ENCODE measurements at regions of chr1 and their contacts with region 1.

Region 1: GRCh38 chr1:21368515-21369289 is 71.2 kb upstream of the NBPF3 start:
- DNase-seq: peak; percentile 56 to 85
- H3K4me3 ChIP-seq: no peak overlapping the region
- H3K27ac ChIP-seq: no peak overlapping the region
- H3K4me1 ChIP-seq: no peaks in the 10 kb centered on the region; a peak in 1 of 7 replicates
- H3K27me3 ChIP-seq: no peaks in the 10 kb centered on the region
- CTCF ChIP-seq: peak; percentile 96 to 98 (median 98)
- EP300 ChIP-seq: no peak
- POLR2A ChIP-seq: no peak
- RAD21 ChIP-seq: peak; percentile 100

Region 2: GRCh38 chr1:21232044-21232443 is 136.7 kb before region 1 on chr1:
- CTCF ChIA-PET with region 1: interaction called, 201 read pairs
- POLR2A ChIA-PET with region 1: no interaction called
- DNase-seq: peak in 1 of 2 experiments; percentile 59
- H3K4me3 ChIP-seq: no peak overlapping the region
- H3K27ac ChIP-seq: no peak overlapping the region
- H3K4me1 ChIP-seq: no peaks in the 10 kb centered on the region
- H3K27me3 ChIP-seq: no peaks in the 10 kb centered on the region
- CTCF ChIP-seq: peak; percentile 25 to 75 (median 75)
- EP300 ChIP-seq: no peak
- POLR2A ChIP-seq: no peak
- RAD21 ChIP-seq: peak; percentile 89 to 90

Region 3: DNA sequence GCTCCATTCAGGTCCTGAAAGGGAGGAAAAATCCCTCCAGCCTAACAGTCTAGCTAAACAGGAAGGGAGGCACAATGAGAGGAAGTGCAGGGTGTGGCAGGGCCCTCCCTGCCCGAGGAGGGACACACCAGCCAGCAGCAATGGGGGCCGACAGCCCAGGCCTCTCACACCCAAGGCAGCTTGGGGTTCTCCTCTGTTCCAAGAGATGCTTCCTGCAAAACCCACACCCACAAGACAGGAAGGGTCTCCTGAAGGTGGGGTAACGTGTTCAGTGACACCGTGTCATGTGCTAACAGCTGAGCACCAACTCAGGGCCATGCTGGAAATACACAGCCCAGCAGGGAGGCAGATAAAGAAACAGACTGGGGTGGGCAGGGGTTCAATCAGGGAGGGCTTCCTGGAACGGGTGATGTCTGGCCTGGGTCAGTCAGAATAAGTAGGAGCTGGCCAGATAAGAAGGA is 88.7 kb before region 1 on chr1:
- CTCF ChIA-PET with region 1: interaction called, 26 read pairs
- POLR2A ChIA-PET with region 1: no interaction called
- DNase-seq: no peak
- H3K4me3 ChIP-seq: no peak overlapping the region
- H3K27ac ChIP-seq: no peak overlapping the region
- H3K4me1 ChIP-seq: peaks cover 0 to 17% (median 4%) of the 10 kb centered on the region in 4 experiments; a peak in 5 of 7 replicates
- H3K27me3 ChIP-seq: no peaks in the 10 kb centered on the region
- CTCF ChIP-seq: no peak
- EP300 ChIP-seq: no peak
- POLR2A ChIP-seq: no peak
- RAD21 ChIP-seq: no peak

Region 4: DNA sequence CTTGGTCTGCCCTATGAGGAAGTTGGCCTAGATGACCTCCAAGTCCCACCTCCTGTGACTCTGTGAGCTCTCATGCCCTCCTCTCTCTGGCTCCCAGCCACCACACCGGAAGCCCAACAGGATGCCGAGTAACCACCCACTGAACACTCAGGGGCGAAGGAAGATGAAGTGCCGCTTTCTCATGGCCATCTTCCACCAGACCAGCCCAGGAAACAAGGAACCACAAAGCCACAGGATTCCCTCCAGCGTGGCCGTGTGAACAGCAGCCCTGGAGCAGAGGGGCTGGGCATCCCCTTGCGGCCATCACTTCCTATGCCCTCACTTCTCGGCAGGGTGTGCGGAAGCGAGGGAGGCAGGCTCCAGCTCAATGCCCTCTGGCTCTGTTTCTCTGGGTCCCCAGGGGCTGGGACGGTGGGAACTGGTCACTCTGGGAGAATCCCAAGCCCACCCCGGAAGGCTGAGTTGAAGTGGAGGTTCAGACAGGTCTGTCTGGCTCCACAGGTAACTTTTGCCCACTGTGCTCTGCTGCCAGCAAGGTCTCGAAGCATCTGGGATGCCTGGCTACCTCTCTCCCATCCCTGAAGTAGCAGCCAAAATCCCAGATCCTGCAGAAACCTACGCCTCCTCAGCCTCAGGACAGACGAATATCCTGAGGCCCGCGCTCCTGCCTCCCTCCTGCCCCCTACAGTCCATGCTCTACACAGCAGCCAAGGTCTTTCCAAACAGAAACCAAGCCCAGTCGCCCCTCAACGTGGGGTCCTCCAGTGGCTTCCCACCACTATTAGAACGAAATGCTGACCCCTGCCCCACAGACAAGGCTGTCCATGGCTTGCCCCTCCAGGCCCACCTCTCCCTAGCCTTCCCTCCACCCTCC is 34.3 kb before region 1 on chr1:
- CTCF ChIA-PET with region 1: interaction called, 84 read pairs
- POLR2A ChIA-PET with region 1: interaction called, 4 read pairs
- DNase-seq: peak in 1 of 2 experiments; percentile 89
- H3K4me3 ChIP-seq: peak overlapping the region in 3 of 4 experiments; percentile 19 to 45 (median 29); a peak in 6 of 8 replicates
- H3K27ac ChIP-seq: no peak overlapping the region
- H3K4me1 ChIP-seq: peaks cover 10 to 31% (median 20%) of the 10 kb centered on the region in 4 experiments
- H3K27me3 ChIP-seq: no peaks in the 10 kb centered on the region; a peak in 1 of 7 replicates
- CTCF ChIP-seq: peak; percentile 90 to 96 (median 93)
- EP300 ChIP-seq: no peak
- POLR2A ChIP-seq: no peak
- RAD21 ChIP-seq: peak; percentile 75 to 86

Region 5: DNA sequence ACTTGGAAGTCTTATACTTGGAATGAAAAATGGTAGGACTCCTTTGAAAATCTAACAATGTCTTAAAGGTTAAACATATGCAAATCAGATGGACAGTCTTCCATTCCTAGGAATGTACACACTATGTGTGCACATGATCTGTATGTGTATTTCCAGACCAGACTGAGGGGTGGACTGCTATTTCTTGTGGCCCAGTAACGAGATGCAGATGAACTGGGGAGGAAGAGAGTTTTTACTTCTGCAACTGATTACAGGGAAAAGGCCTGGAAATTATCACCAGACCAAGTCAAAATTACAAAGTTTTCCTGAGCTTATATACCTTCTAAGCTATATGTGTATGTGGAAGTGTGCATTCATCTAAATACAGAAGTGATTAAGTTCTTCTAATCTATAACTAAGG is 89.0 kb after region 1 on chr1:
- CTCF ChIA-PET with region 1: no interaction called
- POLR2A ChIA-PET with region 1: no interaction called
- DNase-seq: no peak
- H3K4me3 ChIP-seq: no peak overlapping the region
- H3K27ac ChIP-seq: no peak overlapping the region
- H3K4me1 ChIP-seq: no peaks in the 10 kb centered on the region
- H3K27me3 ChIP-seq: no peaks in the 10 kb centered on the region
- CTCF ChIP-seq: no peak
- EP300 ChIP-seq: no peak
- POLR2A ChIP-seq: no peak
- RAD21 ChIP-seq: no peak

Region 6: GRCh38 chr1:21490774-21491553 is 122.3 kb after region 1 on chr1:
- CTCF ChIA-PET with region 1: interaction called, 72 read pairs
- POLR2A ChIA-PET with region 1: no interaction called
- DNase-seq: no peak
- H3K4me3 ChIP-seq: peak overlapping the region in 1 of 4 experiments; percentile 29; a peak in 2 of 8 replicates
- H3K27ac ChIP-seq: no peak overlapping the region
- H3K4me1 ChIP-seq: peaks cover 5 to 8% (median 7%) of the 10 kb centered on the region in 4 experiments; a peak in 5 of 7 replicates
- H3K27me3 ChIP-seq: no peaks in the 10 kb centered on the region
- CTCF ChIP-seq: peak; percentile 87 to 98 (median 98)
- EP300 ChIP-seq: no peak
- POLR2A ChIP-seq: no peak
- RAD21 ChIP-seq: peak; percentile 83 to 87

Region 7: DNA sequence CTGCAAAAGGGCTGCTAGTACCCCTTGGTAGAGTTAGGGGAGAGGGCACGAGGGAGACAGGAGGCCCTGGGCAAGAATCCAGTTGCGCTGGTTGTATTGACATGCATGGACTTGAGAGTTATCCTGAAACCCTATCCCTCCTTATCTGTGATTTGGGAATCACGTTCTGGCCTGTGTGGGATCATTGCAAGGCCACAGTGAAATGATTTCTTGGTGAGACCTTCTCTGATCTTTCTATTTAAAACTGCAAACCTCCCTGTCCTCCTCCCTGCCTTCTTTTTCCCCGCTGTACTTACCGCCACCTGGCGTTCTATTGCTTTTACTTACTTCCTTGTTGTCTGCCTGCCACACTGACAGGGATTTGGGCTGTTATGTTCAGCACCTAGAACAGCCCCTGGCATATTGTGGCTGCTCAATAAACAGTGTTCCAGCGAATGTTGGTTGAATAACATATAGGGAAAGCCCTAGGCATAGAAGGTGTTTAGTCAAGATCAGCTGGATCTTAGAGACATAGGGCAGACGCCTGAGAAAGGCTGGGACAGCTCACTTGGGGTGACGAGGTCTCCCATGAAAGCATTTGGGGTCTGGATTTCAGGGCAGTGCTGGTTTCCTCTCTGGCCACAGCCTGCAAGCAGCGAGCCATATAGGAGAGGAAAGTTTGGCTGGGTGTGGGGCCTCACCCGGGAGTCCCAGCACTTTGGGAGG is 166.1 kb after region 1 on chr1:
- CTCF ChIA-PET with region 1: interaction called, 21 read pairs
- POLR2A ChIA-PET with region 1: no interaction called
- DNase-seq: no peak
- H3K4me3 ChIP-seq: no peak overlapping the region
- H3K27ac ChIP-seq: no peak overlapping the region
- H3K4me1 ChIP-seq: peaks cover 15 to 21% (median 18%) of the 10 kb centered on the region in 4 experiments
- H3K27me3 ChIP-seq: no peaks in the 10 kb centered on the region
- CTCF ChIP-seq: peak; percentile 43 to 71 (median 64)
- EP300 ChIP-seq: no peak
- POLR2A ChIP-seq: no peak
- RAD21 ChIP-seq: peak; percentile 49 to 73

Region 8: DNA sequence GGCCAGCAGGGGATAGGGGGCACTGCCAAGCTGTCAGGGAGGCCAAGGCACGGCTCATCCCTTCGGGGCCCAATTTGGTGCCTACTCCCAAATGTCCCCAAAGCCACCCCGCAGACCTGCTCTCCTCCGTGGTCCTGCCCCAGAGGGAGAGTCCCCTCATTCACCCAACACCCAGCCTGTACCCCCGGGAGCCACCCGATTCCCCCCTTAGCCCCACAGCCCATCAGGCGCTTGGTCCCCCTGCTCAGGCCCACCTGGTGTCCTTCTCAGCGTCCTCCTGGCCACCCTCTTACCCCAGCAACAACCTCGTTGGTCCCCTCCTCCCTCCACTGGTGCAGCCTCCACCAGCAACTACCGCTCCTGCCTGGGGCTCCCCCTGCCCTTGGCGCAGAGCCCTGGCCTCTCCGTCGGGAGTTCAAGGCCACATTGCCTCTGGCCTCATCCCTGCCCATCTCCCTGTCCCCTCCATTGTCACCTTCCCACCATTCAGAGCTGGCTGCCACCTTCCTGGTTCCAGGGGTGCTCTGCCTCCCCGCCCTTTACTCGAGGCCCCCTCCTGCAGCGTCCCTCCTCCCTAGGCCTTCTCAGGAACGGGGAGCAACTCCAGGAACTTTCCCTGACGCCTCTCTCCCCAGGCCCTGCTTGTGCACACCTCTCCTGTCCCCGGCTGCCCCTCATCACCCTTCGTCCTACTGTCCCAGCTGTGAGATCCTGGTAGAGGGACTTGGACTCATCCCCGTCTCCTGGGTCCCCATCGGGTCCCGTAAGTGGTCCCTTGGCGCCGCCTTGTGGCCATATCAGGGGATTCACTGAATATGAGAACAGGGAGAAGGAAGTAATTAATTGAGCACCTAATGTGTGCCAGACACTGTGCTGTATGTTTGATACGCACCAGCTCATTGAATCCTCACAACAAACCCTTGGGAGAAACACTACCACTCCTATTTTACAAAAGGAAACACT is 226.5 kb after region 1 on chr1:
- CTCF ChIA-PET with region 1: interaction called, 63 read pairs
- POLR2A ChIA-PET with region 1: no interaction called
- DNase-seq: peak in 1 of 2 experiments; percentile 93
- H3K4me3 ChIP-seq: no peak overlapping the region
- H3K27ac ChIP-seq: no peak overlapping the region
- H3K4me1 ChIP-seq: peaks cover 5 to 14% (median 10%) of the 10 kb centered on the region in 4 experiments; a peak in 6 of 7 replicates
- H3K27me3 ChIP-seq: 0 out of 7 replicates have a peak, but pooled peaks cover 0 to 2% (median 0%) of the 10 kb centered on the region in 4 experiments
- CTCF ChIP-seq: peak in 2 of 3 experiments; percentile 90 to 94; a peak in 3 of 4 replicates
- EP300 ChIP-seq: no peak
- POLR2A ChIP-seq: no peak
- RAD21 ChIP-seq: peak; percentile 94 to 97